ENCODE measurements at regions of chr1 and their contacts with region 1.

Region 1: GRCh38 chr1:177948336-177948972 is 21.4 kb downstream of the SEC16B start:
- DNase-seq: peak; percentile 35 to 71 (median 53)
- ATAC-seq: peak; percentile 49 to 66
- H3K4me3 ChIP-seq: no peak overlapping the region
- H3K27ac ChIP-seq: no peak overlapping the region
- H3K4me1 ChIP-seq: no peaks in the 10 kb centered on the region
- H3K27me3 ChIP-seq: no peaks in the 10 kb centered on the region

Region 2: GRCh38 chr1:177256153-177257075 is 692.0 kb before region 1 on chr1:
- intact Hi-C with region 1: loop called in 1 of 4 experiments (anchors 10 kb)
- DNase-seq: peak; percentile 54 to 79 (median 74)
- ATAC-seq: peak; percentile 75 to 86
- H3K4me3 ChIP-seq: no peak overlapping the region
- H3K27ac ChIP-seq: no peak overlapping the region
- H3K4me1 ChIP-seq: no peaks in the 10 kb centered on the region
- H3K27me3 ChIP-seq: no peaks in the 10 kb centered on the region

Measured in right cardiac atrium (tissue), 5 donors.